Activated CD4-positive, alpha-beta T cell treated with anti-CD3 and anti-CD28 coated beads for 36 hours (primary cell): ENCODE measurements at regions of chr19 and their contacts with region 1.

Region 1: GRCh38 chr19:3690551-3691371 is 9.5 kb downstream of the PIP5K1C start:
- DNase-seq: peak; percentile 59
- ATAC-seq: peak; percentile 63
- H3K4me3 Mint-ChIP-seq: peak overlapping the region; percentile 36
- H3K27ac Mint-ChIP-seq: peak overlapping the region; percentile 4
- H3K4me1 Mint-ChIP-seq: peaks cover 44% of the 10 kb centered on the region
- H3K27me3 Mint-ChIP-seq: no peaks in the 10 kb centered on the region

Region 2: DNA sequence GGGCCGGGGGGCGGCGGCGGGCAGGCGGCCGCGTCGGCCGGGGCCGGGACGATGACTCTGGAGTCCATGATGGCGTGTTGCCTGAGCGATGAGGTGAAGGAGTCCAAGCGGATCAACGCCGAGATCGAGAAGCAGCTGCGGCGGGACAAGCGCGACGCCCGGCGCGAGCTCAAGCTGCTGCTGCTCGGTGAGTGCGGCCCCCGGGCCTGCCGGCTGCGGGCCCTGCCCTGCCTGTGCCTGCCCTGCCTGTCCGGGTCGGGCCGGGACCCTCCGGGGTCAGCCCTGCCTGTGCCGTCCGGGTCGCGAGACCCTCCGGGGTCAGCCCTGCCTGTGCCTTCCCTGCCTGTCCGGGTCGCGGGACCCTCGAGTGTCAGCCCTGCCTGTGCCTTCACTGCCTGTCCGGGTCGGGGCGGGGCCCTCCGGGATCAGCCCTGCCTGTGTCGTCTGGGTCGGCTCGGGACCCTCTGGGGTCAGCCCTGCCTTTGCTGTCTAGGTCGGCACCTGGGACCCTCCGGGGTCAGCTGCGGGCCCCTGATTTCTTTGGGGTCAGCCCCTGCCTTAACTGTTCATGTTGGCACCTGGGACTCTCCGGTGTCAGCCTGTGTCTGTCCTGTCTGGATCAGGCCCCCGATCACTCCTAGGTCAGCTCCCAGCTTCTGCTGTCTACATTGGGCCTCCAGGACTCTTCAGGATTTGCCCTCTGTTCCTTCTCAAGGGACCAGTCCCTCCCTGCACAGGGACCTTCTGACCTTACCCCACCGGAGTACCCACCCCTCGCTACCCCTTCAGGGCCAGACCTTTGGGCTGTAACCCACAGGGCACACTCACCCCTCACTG is 595.9 kb before region 1 on chr19:
- CTCF ChIA-PET with region 1: no interaction called
- POLR2A ChIA-PET with region 1: no interaction called
- intact Hi-C with region 1: no loop called
- DNase-seq: peak; percentile 68
- ATAC-seq: peak; percentile 45
- H3K4me3 Mint-ChIP-seq: peak overlapping the region; percentile 74
- H3K27ac Mint-ChIP-seq: no peak overlapping the region
- H3K4me1 Mint-ChIP-seq: peaks cover 26% of the 10 kb centered on the region
- H3K27me3 Mint-ChIP-seq: no peaks in the 10 kb centered on the region

Region 3: DNA sequence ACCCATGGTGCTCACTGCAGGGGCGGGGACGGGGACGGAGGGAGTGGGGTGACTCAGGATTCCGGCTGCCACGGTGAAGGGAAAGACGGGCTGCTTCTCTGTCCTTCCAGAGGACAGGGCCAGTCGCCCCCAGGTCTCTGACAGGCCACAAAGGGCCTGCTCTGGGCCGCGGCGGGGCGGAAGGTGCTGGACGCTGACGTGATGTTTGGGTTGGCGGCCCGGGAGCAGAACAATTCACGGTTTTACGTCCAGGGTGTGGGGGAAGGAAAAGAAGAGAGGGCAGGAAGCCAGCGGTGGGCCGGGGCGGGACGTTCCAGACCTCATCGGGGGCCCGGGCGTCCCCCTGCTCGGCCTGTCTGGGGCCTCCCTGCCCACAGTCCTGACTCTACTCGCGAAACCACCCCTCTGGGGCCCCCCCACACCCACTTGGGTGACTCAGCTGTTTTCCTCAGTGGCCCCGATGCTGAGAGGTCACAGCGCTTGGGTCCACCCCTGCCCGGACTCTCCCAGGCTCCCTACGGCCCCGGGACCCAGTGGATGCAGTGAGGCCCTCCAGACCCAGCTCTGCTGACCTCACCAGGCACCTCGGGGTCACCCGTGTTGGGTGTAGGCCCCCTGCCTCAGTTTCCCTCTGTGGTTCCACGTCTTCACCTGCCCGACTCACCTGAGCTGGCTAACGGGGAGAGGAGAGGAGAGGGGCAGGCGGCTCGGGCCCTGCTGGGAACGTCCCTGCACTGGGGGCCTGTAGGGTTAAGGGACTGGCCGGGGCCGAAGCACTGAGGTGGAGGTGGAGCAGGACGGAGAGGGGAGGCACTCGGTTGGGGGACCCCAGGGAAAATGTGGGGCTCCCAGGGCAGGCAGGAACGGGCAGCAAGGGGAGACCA is 19.7 kb before region 1 on chr19:
- CTCF ChIA-PET with region 1: interaction called, 7 read pairs
- POLR2A ChIA-PET with region 1: interaction called, 5 read pairs
- intact Hi-C with region 1: loop called in 1 of 2 experiments (anchors 1 kb)
- DNase-seq: peak; percentile 71
- ATAC-seq: peak; percentile 50
- H3K4me3 Mint-ChIP-seq: peak overlapping the region; percentile 49
- H3K27ac Mint-ChIP-seq: peak overlapping the region; percentile 78
- H3K4me1 Mint-ChIP-seq: peaks cover 23% of the 10 kb centered on the region
- H3K27me3 Mint-ChIP-seq: no peaks in the 10 kb centered on the region

Region 4: GRCh38 chr19:3743486-3743885 is 52.7 kb after region 1 on chr19:
- CTCF ChIA-PET with region 1: no interaction called
- POLR2A ChIA-PET with region 1: no interaction called
- intact Hi-C with region 1: no loop called
- DNase-seq: no peak
- ATAC-seq: peak; percentile 49
- H3K4me3 Mint-ChIP-seq: no peak overlapping the region
- H3K27ac Mint-ChIP-seq: no peak overlapping the region
- H3K4me1 Mint-ChIP-seq: peaks cover 12% of the 10 kb centered on the region
- H3K27me3 Mint-ChIP-seq: no peaks in the 10 kb centered on the region